ENCODE measurements at regions of chr2 and their contacts with region 1.

Region 1: DNA sequence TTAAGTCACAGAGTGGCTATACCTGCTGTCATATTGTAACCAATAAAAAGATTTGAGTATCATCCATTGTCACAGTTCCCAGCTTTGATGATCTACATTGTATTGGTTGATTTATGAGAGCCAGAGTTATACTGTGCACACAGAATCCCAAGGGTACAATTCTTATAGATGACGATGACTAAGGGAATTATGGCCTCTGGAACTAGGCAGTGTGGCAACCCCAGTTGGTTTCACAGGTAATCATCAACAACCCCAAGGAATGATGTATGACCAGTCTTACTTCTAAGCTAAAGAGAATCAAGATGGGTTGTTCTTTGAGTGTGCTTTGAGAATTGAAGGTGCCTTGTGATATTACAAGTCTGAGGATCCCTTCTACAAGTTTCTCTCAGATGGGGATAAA is 217.3 kb downstream of the ETAA1 start:
- DNase-seq: no peak
- H3K4me3 ChIP-seq: no peak overlapping the region
- H3K27ac ChIP-seq: no peak overlapping the region
- H3K4me1 ChIP-seq: peaks cover 0 to 6% (median 0%) of the 10 kb centered on the region in 4 donors
- H3K27me3 ChIP-seq: no peaks in the 10 kb centered on the region
- CTCF ChIP-seq: no peak
- EP300 ChIP-seq: no peak
- POLR2A ChIP-seq: no peak

Region 2: GRCh38 chr2:67412424-67412823 is 202.0 kb before region 1 on chr2:
- in situ Hi-C with region 1: no loop called
- intact Hi-C with region 1: no loop called
- DNase-seq: no peak
- H3K4me3 ChIP-seq: no peak overlapping the region
- H3K27ac ChIP-seq: no peak overlapping the region
- H3K4me1 ChIP-seq: no peaks in the 10 kb centered on the region
- H3K27me3 ChIP-seq: no peaks in the 10 kb centered on the region
- CTCF ChIP-seq: no peak
- EP300 ChIP-seq: no peak
- POLR2A ChIP-seq: no peak

Region 3: GRCh38 chr2:67503066-67503795 is 111.2 kb before region 1 on chr2:
- in situ Hi-C with region 1: no loop called
- intact Hi-C with region 1: no loop called
- DNase-seq: no peak
- H3K4me3 ChIP-seq: no peak overlapping the region
- H3K27ac ChIP-seq: no peak overlapping the region
- H3K4me1 ChIP-seq: no peaks in the 10 kb centered on the region
- H3K27me3 ChIP-seq: no peaks in the 10 kb centered on the region
- CTCF ChIP-seq: no peak
- EP300 ChIP-seq: no peak
- POLR2A ChIP-seq: no peak

Region 4: GRCh38 chr2:67565761-67566160 is 48.7 kb before region 1 on chr2:
- in situ Hi-C with region 1: no loop called
- intact Hi-C with region 1: loop called (anchors 1 kb)
- DNase-seq: no peak
- H3K4me3 ChIP-seq: no peak overlapping the region
- H3K27ac ChIP-seq: no peak overlapping the region
- H3K4me1 ChIP-seq: peaks cover 0 to 4% (median 0%) of the 10 kb centered on the region in 4 donors
- H3K27me3 ChIP-seq: peaks cover 6% of the 10 kb centered on the region
- CTCF ChIP-seq: no peak
- EP300 ChIP-seq: no peak
- POLR2A ChIP-seq: no peak

Measured in transverse colon (tissue), 4 donors.